ENCODE measurements at regions of chr12 and their contacts with region 1.

Region 1: GRCh38 chr12:122471324-122472226 is 29.2 kb downstream of the ZCCHC8 start:
- DNase-seq: peak; percentile 81
- H3K4me3 Mint-ChIP-seq: no peak overlapping the region
- H3K27ac Mint-ChIP-seq: peak overlapping the region; percentile 74
- H3K4me1 Mint-ChIP-seq: peaks cover 21% of the 10 kb centered on the region
- H3K27me3 Mint-ChIP-seq: no peaks in the 10 kb centered on the region
- CTCF ChIP-seq: peak; percentile 64

Region 2: GRCh38 chr12:122148657-122149056 is 322.9 kb before region 1 on chr12:
- CTCF ChIA-PET with region 1: no interaction called
- POLR2A ChIA-PET with region 1: no interaction called
- intact Hi-C with region 1: no loop called
- DNase-seq: no peak
- H3K4me3 Mint-ChIP-seq: no peak overlapping the region
- H3K27ac Mint-ChIP-seq: no peak overlapping the region
- H3K4me1 Mint-ChIP-seq: no peaks in the 10 kb centered on the region
- H3K27me3 Mint-ChIP-seq: peaks cover 13% of the 10 kb centered on the region
- CTCF ChIP-seq: no peak

Region 3: GRCh38 chr12:122336015-122336946 is 135.3 kb before region 1 on chr12:
- CTCF ChIA-PET with region 1: interaction called, 5 read pairs
- POLR2A ChIA-PET with region 1: no interaction called
- intact Hi-C with region 1: loop called (anchors 5 kb)
- DNase-seq: peak; percentile 34
- H3K4me3 Mint-ChIP-seq: no peak overlapping the region
- H3K27ac Mint-ChIP-seq: no peak overlapping the region
- H3K4me1 Mint-ChIP-seq: peaks cover 5% of the 10 kb centered on the region
- H3K27me3 Mint-ChIP-seq: no peaks in the 10 kb centered on the region
- CTCF ChIP-seq: peak; percentile 82

Region 4: GRCh38 chr12:122389697-122390096 is 81.9 kb before region 1 on chr12:
- CTCF ChIA-PET with region 1: interaction called, 12 read pairs
- POLR2A ChIA-PET with region 1: interaction called, 3 read pairs
- intact Hi-C with region 1: no loop called
- DNase-seq: no peak
- H3K4me3 Mint-ChIP-seq: no peak overlapping the region
- H3K27ac Mint-ChIP-seq: no peak overlapping the region
- H3K4me1 Mint-ChIP-seq: no peaks in the 10 kb centered on the region
- H3K27me3 Mint-ChIP-seq: no peaks in the 10 kb centered on the region
- CTCF ChIP-seq: no peak

Region 5: GRCh38 chr12:122421821-122422729 is 49.5 kb before region 1 on chr12 and contains the start of gene CLIP1:
- CTCF ChIA-PET with region 1: interaction called, 38 read pairs
- POLR2A ChIA-PET with region 1: interaction called, 66 read pairs
- intact Hi-C with region 1: loop called (anchors 1 kb)
- DNase-seq: peak; percentile 68
- H3K4me3 Mint-ChIP-seq: peak within 1 kb of the TSS; percentile 87
- H3K27ac Mint-ChIP-seq: peak within 1 kb of the TSS; percentile 95
- H3K4me1 Mint-ChIP-seq: peaks cover 4% of the 10 kb centered on the region
- H3K27me3 Mint-ChIP-seq: no peaks in the 10 kb centered on the region
- CTCF ChIP-seq: peak; percentile 66
- total RNA-seq, gene CLIP1: 92.6 and 115 TPM in 2 replicates

Region 6: DNA sequence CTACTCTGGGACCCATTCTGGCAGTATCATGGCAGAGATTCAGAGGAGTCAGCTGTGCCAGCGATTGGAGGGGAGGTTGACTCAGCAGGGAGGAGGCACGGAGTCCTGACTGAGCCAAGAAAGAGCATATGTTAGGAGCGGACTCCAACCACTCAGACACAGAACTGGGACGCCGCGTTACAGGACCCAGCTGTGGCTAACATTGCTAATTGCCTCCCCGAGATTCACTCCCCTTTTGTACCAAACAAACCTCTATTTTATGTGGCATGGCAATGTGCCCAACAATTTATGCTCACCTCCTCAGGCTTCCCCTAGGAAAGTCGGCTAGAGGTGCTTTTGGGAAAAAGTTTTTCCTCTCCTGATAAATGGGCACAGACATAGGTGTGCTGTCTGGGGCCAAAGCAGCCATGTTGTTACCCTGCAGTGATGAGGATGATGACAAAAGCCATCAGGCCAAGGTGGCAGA is 33.9 kb before region 1 on chr12:
- CTCF ChIA-PET with region 1: interaction called, 19 read pairs
- POLR2A ChIA-PET with region 1: interaction called, 11 read pairs
- intact Hi-C with region 1: no loop called
- DNase-seq: peak; percentile 88
- H3K4me3 Mint-ChIP-seq: peak overlapping the region; percentile 13
- H3K27ac Mint-ChIP-seq: no peak overlapping the region
- H3K4me1 Mint-ChIP-seq: peaks cover 22% of the 10 kb centered on the region
- H3K27me3 Mint-ChIP-seq: no peaks in the 10 kb centered on the region
- CTCF ChIP-seq: no peak

Region 7: DNA sequence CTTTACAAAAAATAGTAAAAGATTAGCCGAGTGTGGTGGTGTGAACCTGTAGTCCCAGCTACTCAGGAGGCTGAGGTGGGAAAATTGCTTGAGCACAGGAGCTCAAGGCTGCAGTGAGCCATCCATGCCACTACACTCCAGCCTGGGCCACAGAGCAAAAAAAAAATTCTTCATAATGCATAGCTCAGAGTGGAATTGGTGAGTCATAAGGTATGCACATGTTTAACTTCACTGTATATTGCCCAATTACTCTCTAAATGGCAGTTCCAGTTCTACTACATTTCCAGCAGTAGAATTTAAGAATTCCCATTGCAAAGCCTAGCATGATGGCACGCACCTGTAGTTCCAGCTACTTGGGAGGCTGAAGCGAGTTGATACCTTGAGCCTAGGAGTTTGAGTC is 22.2 kb before region 1 on chr12:
- CTCF ChIA-PET with region 1: interaction called, 15 read pairs
- POLR2A ChIA-PET with region 1: interaction called, 17 read pairs
- intact Hi-C with region 1: no loop called
- DNase-seq: peak; percentile 90
- H3K4me3 Mint-ChIP-seq: no peak overlapping the region
- H3K27ac Mint-ChIP-seq: no peak overlapping the region
- H3K4me1 Mint-ChIP-seq: peaks cover 15% of the 10 kb centered on the region
- H3K27me3 Mint-ChIP-seq: no peaks in the 10 kb centered on the region
- CTCF ChIP-seq: no peak

Region 8: GRCh38 chr12:122500685-122501488 is 29.3 kb after region 1 on chr12 and contains the start of gene ZCCHC8:
- CTCF ChIA-PET with region 1: interaction called, 4 read pairs
- POLR2A ChIA-PET with region 1: interaction called, 61 read pairs
- intact Hi-C with region 1: no loop called
- DNase-seq: peak; percentile 99
- H3K4me3 Mint-ChIP-seq: peak within 1 kb of the TSS; percentile 93
- H3K27ac Mint-ChIP-seq: peak within 1 kb of the TSS; percentile 96
- H3K4me1 Mint-ChIP-seq: peaks cover 11% of the 10 kb centered on the region
- H3K27me3 Mint-ChIP-seq: no peaks in the 10 kb centered on the region
- CTCF ChIP-seq: no peak
- total RNA-seq, gene ZCCHC8: 33.4 and 41.8 TPM in 2 replicates

Measured in MCF 10A (cell line).